Activated CD4-positive, alpha-beta memory T cell treated with anti-CD3 and anti-CD28 coated beads for 36 hours (primary cell): ENCODE measurements at regions of chr7 and their contacts with region 1.

Region 1: DNA sequence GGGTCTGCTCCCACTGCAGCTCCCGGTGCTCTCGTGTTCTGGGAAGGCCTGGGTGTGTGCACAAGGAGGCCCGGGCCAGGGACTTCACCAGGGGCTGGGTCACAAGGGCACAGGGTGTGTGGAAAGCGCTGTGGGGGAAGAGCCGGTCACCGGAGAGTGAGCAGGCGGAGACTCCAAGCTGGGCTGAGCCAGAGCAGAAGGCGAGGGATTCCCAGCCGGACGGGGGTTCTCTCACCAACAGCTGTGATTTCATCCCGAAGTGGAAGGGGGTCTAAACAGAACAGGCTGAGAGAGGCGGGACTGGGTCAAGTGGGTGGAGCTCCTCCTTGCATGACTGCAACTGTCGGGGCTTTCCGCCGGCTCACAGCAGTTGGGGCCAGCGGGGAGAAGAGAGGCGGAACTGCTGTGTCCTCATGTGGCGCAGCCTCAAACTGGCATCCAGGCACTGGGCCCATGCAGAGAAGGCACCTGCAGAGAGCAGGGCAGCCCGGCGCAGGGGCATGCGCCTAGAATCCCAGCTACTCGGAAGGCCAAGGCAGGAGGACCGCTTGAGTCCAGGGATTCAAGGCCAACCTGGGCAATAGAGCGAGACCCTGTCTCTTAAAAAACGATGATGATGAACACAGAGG is 7.6 kb upstream of the ORAI2 start:
- DNase-seq: peak; percentile 92
- H3K4me3 Mint-ChIP-seq: peak overlapping the region; percentile 76
- H3K27ac Mint-ChIP-seq: peak overlapping the region; percentile 100
- H3K4me1 Mint-ChIP-seq: peaks cover 62% of the 10 kb centered on the region
- H3K27me3 Mint-ChIP-seq: no peaks in the 10 kb centered on the region

Region 2: DNA sequence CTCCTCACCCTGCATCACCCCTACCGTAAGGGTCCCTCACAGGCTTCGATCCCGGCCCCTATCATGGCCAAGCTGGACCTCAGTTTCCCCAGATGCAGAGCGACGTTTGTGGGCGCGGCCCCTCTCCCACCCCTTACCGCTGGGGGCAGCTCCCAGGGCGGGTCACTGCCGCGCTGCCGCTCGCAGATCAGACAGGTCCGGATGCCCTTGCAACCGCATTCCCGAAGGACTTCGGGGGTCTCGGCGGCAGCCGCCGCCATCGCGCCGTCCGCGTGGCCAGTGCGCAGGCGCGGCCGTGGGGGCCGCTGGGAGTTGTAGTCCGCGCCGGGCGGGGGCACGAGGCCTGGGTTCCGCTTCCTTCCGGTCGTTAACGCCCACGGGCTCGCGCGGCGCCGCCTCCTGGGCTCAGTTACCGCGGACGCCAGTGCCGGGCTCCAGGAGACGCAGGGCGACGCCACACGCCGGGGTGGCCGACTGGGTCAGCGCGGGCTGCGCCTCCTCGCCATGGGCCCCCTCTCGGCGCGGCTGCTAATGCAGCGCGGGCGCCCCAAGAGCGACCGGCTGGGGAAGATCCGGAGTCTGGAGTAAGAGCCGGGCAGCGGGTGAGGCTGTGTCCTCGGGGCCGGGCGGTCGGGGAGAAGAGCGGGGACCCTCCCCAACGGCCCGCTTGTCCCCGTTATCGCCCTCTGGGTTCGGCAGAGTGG is 39.0 kb after region 1 on chr7 and contains the starts of genes ALKBH4 and LRWD1:
- CTCF ChIA-PET with region 1: no interaction called
- POLR2A ChIA-PET with region 1: interaction called, 6 read pairs
- intact Hi-C with region 1: loop called (anchors 1 kb)
- DNase-seq: peak; percentile 97
- H3K4me3 Mint-ChIP-seq: peak within 1 kb of the TSS; percentile 93
- H3K27ac Mint-ChIP-seq: peak within 1 kb of the TSS; percentile 75
- H3K4me1 Mint-ChIP-seq: peaks cover 28% of the 10 kb centered on the region
- H3K27me3 Mint-ChIP-seq: no peaks in the 10 kb centered on the region
- total RNA-seq, gene ALKBH4: 7.7 to 7.8 TPM
- total RNA-seq, gene LRWD1: 16.4 to 20.0 TPM